IMR-90 (cell line): ENCODE measurements at regions of chr16 and their contacts with region 1.

Region 1: DNA sequence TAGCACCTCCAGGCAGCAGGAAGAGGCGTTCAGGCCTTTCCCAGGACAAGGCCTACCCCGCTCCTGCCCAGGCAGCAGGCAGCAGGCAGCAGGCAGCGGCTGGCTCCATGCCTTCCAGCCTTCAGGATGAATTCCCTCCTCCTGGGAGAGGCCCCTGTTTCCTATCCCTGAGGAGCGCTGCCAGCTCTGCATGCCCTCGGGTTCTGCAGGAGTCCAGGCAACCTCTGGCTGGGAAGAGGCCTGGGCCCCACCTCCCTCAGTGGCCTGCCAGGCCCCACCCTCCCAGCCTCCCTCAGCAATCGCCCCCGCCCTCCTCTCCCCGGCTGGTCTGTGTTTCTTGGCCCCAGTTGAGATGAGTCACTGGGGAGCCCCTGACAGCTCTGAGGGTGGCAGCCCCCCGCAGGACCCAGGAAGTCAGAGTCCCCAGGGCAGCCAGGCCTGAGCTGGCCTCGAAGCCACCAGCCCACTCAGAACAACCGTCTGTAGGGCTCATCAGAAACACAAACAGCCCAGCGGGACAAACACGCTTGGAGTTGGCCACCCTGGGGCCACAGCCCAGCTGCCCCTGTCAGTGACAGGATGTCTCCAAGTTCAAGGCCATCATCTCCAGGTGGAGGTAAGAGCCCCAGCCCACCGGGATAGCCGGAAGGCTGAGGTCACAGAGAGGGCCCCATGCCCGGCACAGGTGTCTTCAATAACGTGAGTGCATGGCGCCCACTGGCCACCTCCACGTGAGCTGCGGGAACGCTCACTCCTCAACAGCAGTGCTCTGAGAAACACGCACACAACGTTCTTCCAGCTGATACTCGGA is 39.5 kb upstream of the CIBAR2 start:
- DNase-seq: peak; percentile 78
- ATAC-seq: peak; percentile 98
- H3K4me3 ChIP-seq: no peak overlapping the region
- H3K27ac ChIP-seq: peak overlapping the region; percentile 75
- H3K4me1 ChIP-seq: peaks cover 24% of the 10 kb centered on the region
- H3K27me3 ChIP-seq: no peaks in the 10 kb centered on the region; the same call in 1 of the 2 replicates
- CTCF ChIP-seq: no peak
- POLR2A ChIP-seq: no peak
- RAD21 ChIP-seq: no peak

Region 2: GRCh38 chr16:85162478-85163277 is 10.9 kb after region 1 on chr16:
- CTCF ChIA-PET with region 1: interaction called, 3 read pairs
- POLR2A ChIA-PET with region 1: no interaction called
- dilution Hi-C with region 1: no loop called
- in situ Hi-C with region 1: no loop called
- intact Hi-C with region 1: loop called (anchors 1 kb)
- DNase-seq: peak; percentile 91
- ATAC-seq: peak; percentile 83
- H3K4me3 ChIP-seq: no peak overlapping the region
- H3K27ac ChIP-seq: peak overlapping the region; percentile 53
- H3K4me1 ChIP-seq: peaks cover 36% of the 10 kb centered on the region
- H3K27me3 ChIP-seq: no peaks in the 10 kb centered on the region
- CTCF ChIP-seq: no peak
- POLR2A ChIP-seq: no peak
- RAD21 ChIP-seq: peak; percentile 25; the same call in 1 of the 2 replicates